ENCODE measurements at regions of chr6 and their contacts with region 1.

Region 1: GRCh38 chr6:64630901-64631300 is 995.3 kb downstream of the PHF3 start:
- DNase-seq: no peak
- H3K4me3 ChIP-seq: no peak overlapping the region
- H3K27ac ChIP-seq: no peak overlapping the region
- H3K4me1 ChIP-seq: no peaks in the 10 kb centered on the region
- H3K27me3 ChIP-seq: no peaks in the 10 kb centered on the region
- CTCF ChIP-seq: no peak
- EP300 ChIP-seq: no peak
- POLR2A ChIP-seq: no peak

Region 2: GRCh38 chr6:65908065-65908464 is 1277.2 kb after region 1 on chr6:
- intact Hi-C with region 1: loop called in 1 of 4 experiments (anchors 5 kb)
- DNase-seq: no peak
- H3K4me3 ChIP-seq: no peak overlapping the region
- H3K27ac ChIP-seq: no peak overlapping the region
- H3K4me1 ChIP-seq: no peaks in the 10 kb centered on the region
- H3K27me3 ChIP-seq: no peaks in the 10 kb centered on the region
- CTCF ChIP-seq: no peak
- EP300 ChIP-seq: no peak
- POLR2A ChIP-seq: no peak